ENCODE measurements at regions of chr11 and their contacts with region 1.

Region 1: GRCh38 chr11:102495161-102496042 is 35.1 kb downstream of the MMP7 start:
- DNase-seq: peak in 24 of 42 donors; percentile 12 to 82 (median 52)

Region 2: GRCh38 chr11:102341844-102342318 is 153.5 kb before region 1 on chr11:
- intact Hi-C with region 1: loop called (anchors 5 kb)
- DNase-seq: peak in 40 of 42 donors; percentile 36 to 90 (median 74)

Region 3: GRCh38 chr11:102375720-102376399 is 119.5 kb before region 1 on chr11:
- intact Hi-C with region 1: no loop called
- DNase-seq: no peak

Region 4: DNA sequence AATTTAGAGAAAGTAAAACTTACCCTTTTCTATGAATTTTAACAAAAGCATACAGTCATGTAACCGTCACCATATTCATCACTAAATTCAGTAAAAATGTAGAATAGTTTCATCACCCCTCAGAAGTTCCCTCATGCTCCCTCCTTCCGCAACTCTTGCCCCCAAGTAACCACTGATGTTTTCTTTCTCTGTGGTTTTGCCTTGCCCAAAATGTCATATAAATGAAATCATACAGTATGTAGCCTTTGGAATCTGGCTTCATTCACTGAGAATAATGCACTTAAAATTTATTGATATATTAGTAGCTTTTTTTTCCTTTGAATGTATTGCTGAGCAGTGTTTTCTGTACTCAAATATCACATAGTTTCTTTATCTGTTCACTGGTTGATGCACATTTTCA is 536.4 kb after region 1 on chr11:
- intact Hi-C with region 1: no loop called
- DNase-seq: no peak